A673 (cell line): ENCODE measurements at regions of chr4 and their contacts with region 1.

Region 1: GRCh38 chr4:180630012-180630665 is 1613.1 kb upstream of the TENM3 start:
- DNase-seq: peak; percentile 82
- H3K4me3 ChIP-seq: no peak overlapping the region
- H3K27ac ChIP-seq: peak overlapping the region; percentile 66
- H3K4me1 ChIP-seq: peaks cover 28% of the 10 kb centered on the region
- H3K27me3 ChIP-seq: no peaks in the 10 kb centered on the region
- CTCF ChIP-seq: no peak

Region 2: DNA sequence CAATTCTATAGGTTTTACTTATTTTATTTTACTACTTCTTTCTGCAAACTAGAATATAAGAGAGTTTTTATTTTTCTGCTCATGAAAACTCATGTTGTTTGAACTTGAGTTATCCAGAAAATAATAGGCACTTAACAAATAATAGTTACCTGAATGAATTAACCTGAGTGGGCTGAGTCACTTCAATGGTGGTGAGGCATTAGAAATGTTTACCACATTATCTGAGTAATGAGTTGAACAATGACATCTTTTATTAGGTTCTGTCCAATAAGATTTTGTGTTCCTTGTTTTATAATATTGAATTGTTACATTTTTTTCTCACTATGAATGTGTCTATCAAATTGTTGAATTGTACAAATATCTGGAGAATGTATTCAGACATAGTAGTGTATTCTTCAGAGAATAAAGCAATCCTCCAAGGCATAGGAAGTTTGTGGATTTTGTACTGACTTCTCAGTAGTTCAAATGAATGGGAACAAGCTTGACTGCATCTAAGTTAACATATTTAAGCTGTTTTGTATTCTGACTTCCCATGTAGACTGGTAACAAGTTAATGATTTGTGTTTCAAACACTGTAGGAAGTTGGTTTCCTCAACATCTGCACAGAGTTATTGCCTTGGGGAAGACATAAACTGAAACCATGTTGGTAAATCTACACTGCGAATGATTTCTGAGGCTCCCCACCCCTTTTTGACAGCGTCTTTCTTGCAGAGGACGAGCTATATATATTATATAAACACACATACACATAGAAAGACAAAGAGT is 195.8 kb before region 1 on chr4:
- CTCF ChIA-PET with region 1: no interaction called
- POLR2A ChIA-PET with region 1: no interaction called
- intact Hi-C with region 1: no loop called
- DNase-seq: no peak
- H3K4me3 ChIP-seq: no peak overlapping the region
- H3K27ac ChIP-seq: no peak overlapping the region
- H3K4me1 ChIP-seq: peaks cover 20% of the 10 kb centered on the region
- H3K27me3 ChIP-seq: no peaks in the 10 kb centered on the region
- CTCF ChIP-seq: no peak

Region 3: DNA sequence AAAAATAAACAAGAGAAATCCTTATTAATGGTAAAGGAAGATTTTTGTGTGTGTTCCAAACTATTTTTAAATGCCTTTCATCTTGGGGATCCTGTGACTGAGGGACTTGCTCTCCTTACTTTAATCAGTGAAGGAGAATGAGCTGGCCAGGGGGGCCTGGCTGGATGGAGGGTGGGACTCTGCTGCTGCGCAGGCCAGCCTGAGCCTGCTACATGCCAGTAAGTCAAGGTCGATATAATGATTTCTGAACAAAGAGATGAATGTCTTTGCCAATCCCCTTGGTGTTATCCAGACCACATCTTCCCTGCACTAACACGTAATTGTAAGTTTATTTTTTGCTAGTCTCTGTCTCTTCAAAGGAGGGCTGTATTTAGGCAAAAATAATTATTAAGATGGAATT is 66.1 kb before region 1 on chr4:
- CTCF ChIA-PET with region 1: no interaction called
- POLR2A ChIA-PET with region 1: no interaction called
- intact Hi-C with region 1: loop called (anchors 2 kb)
- DNase-seq: peak; percentile 64
- H3K4me3 ChIP-seq: peak overlapping the region; percentile 48
- H3K27ac ChIP-seq: peak overlapping the region; percentile 92
- H3K4me1 ChIP-seq: peaks cover 61% of the 10 kb centered on the region
- H3K27me3 ChIP-seq: no peaks in the 10 kb centered on the region
- CTCF ChIP-seq: no peak